ENCODE measurements at regions of chr5 and their contacts with region 1.

Region 1: DNA sequence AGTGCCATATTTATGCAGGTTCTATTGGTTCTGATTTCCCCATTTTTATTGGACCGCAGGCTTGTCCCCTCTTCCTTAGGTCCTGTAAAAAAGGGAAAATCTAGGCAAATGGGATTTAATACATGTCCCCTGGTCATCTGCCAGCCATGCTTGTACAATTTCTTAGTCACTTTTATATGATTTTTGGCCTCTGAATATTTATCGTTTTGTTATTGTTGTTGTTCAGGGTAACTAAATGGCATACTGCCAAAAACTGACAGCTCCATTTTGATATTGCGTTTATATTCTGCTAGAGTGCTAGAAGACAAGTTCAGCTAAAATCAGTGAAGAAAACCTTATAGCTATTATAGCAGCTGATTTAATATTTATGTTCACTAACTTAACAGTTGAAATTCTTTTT is 770.2 kb upstream of the FAM174A start:
- DNase-seq: no peak
- H3K4me3 ChIP-seq: no peak overlapping the region
- H3K27ac ChIP-seq: no peak overlapping the region
- H3K4me1 ChIP-seq: no peaks in the 10 kb centered on the region
- H3K27me3 ChIP-seq: no peaks in the 10 kb centered on the region
- CTCF ChIP-seq: no peak
- POLR2A ChIP-seq: no peak

Region 2: DNA sequence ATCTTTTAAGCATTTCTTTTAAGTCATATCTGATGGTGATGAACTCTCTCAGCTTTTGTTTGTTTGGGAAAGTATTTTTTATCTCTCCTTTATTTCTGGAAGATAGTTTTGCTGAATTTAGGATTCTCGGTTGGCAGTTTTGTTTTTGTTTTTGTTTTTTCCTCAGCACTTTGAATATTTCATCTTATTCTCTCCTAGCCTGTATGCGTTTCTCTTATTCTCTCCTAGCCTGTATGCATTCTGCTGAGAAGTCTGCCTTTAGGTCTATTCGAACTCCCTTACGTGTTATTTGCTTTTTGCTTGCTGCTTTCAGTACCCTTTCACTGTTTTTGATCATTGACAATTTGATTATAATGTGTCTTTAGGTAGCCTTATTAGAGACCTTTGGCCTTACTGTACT is 17.7 kb before region 1 on chr5:
- intact Hi-C with region 1: no loop called
- DNase-seq: no peak
- H3K4me3 ChIP-seq: no peak overlapping the region
- H3K27ac ChIP-seq: no peak overlapping the region
- H3K4me1 ChIP-seq: no peaks in the 10 kb centered on the region
- H3K27me3 ChIP-seq: no peaks in the 10 kb centered on the region
- CTCF ChIP-seq: no peak
- POLR2A ChIP-seq: no peak

Region 3: DNA sequence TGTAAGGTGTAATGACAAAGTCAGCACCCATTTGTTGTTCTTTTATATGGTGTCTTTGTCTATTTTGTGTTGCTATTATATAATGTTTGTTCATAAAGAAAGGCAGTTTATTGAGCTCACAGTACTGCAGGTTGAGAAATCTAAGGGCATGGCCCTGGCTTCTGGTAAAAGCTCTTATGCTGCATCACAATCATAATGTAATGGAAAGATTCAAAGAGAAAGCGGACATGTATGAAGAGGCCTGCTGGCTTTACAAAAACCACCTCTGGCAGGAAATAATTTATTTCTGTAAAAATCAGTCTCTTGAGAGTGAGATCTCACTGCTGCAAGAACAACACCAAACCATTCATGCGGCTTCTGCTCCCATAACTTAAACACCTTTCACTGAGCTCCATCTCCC is 23.5 kb after region 1 on chr5:
- intact Hi-C with region 1: loop called (anchors 2 kb)
- DNase-seq: no peak
- H3K4me3 ChIP-seq: no peak overlapping the region
- H3K27ac ChIP-seq: no peak overlapping the region
- H3K4me1 ChIP-seq: no peaks in the 10 kb centered on the region
- H3K27me3 ChIP-seq: no peaks in the 10 kb centered on the region
- CTCF ChIP-seq: no peak
- POLR2A ChIP-seq: no peak

Measured in breast epithelium (tissue), 4 donors.